Endothelial cell of umbilical vein (primary cell): ENCODE measurements at regions of chr17 and their contacts with region 1.

Region 1: GRCh38 chr17:28849281-28849680 is 5.5 kb upstream of the ERAL1 start:
- DNase-seq: peak; percentile 23
- H3K4me3 ChIP-seq: no peak overlapping the region
- H3K27ac ChIP-seq: no peak overlapping the region
- H3K4me1 ChIP-seq: peaks cover 2% of the 10 kb centered on the region
- H3K27me3 ChIP-seq: no peaks in the 10 kb centered on the region
- CTCF ChIP-seq: no peak
- POLR2A ChIP-seq: no peak

Region 2: GRCh38 chr17:28644985-28645939 is 204.0 kb before region 1 on chr17 and contains the start of gene BLTP2:
- CTCF ChIA-PET with region 1: no interaction called
- POLR2A ChIA-PET with region 1: no interaction called
- dilution Hi-C with region 1: no loop called
- intact Hi-C with region 1: no loop called
- DNase-seq: peak; percentile 95
- H3K4me3 ChIP-seq: peak within 1 kb of the TSS; percentile 54 to 77 (median 71)
- H3K27ac ChIP-seq: peak within 1 kb of the TSS; percentile 36
- H3K4me1 ChIP-seq: peaks cover 23% of the 10 kb centered on the region
- H3K27me3 ChIP-seq: no peaks in the 10 kb centered on the region
- CTCF ChIP-seq: no peak
- POLR2A ChIP-seq: peak; percentile 93
- total RNA-seq, gene BLTP2: 164 and 165 TPM in 2 replicates

Region 3: DNA sequence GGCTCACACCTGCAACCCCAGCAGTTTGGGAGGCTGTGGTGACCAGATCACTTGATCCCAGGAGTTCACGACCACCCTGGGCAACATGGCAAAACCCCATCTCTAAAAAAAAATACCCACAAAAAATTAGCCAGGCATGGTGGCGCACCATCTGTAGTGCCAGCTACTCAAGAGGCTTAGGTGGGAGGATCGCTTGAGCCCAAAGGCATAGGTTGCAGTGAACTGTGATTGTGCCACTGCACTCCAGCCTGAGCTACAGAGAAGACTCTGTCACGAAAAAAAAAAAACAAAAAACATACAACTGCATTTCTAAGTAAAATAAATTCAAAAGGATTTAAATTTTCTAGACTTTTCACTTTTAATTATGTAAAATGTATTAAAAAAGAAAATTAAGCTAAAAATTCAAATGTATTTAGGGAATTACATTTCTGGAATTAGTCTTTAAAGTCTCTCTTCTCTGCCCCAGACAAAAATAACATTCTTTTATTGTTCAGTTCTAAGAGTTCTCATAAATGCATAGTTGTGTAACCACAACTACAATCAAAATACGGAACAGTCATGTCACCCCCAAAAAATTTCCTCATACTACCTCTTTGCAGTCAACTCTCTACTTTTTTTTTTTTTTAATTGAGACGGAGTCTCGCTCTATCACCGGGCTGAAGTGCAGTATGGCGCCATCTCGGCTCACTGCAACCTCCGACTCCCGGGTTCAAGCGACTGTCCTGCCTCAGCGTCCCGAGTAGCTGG is 20.8 kb before region 1 on chr17:
- CTCF ChIA-PET with region 1: interaction called, 11 read pairs
- POLR2A ChIA-PET with region 1: no interaction called
- dilution Hi-C with region 1: no loop called
- intact Hi-C with region 1: no loop called
- DNase-seq: no peak
- H3K4me3 ChIP-seq: no peak overlapping the region
- H3K27ac ChIP-seq: no peak overlapping the region
- H3K4me1 ChIP-seq: no peaks in the 10 kb centered on the region
- H3K27me3 ChIP-seq: no peaks in the 10 kb centered on the region
- CTCF ChIP-seq: no peak
- POLR2A ChIP-seq: no peak

Region 4: GRCh38 chr17:28878981-28879380 is 29.7 kb after region 1 on chr17:
- CTCF ChIA-PET with region 1: interaction called, 17 read pairs
- POLR2A ChIA-PET with region 1: no interaction called
- dilution Hi-C with region 1: no loop called
- intact Hi-C with region 1: no loop called
- DNase-seq: peak; percentile 33
- H3K4me3 ChIP-seq: no peak overlapping the region
- H3K27ac ChIP-seq: no peak overlapping the region
- H3K4me1 ChIP-seq: no peaks in the 10 kb centered on the region
- H3K27me3 ChIP-seq: no peaks in the 10 kb centered on the region
- CTCF ChIP-seq: peak; percentile 10 to 47
- POLR2A ChIP-seq: no peak

Region 5: GRCh38 chr17:28902819-28903545 is 53.7 kb after region 1 on chr17 and contains the start of gene DHRS13:
- CTCF ChIA-PET with region 1: interaction called, 12 read pairs
- POLR2A ChIA-PET with region 1: no interaction called
- dilution Hi-C with region 1: no loop called
- intact Hi-C with region 1: loop called (anchors 2 kb)
- DNase-seq: peak; percentile 93
- H3K4me3 ChIP-seq: peak within 1 kb of the TSS; percentile 45 to 67 (median 59)
- H3K27ac ChIP-seq: peak within 1 kb of the TSS; percentile 15
- H3K4me1 ChIP-seq: peaks cover 13% of the 10 kb centered on the region
- H3K27me3 ChIP-seq: no peaks in the 10 kb centered on the region
- CTCF ChIP-seq: peak; percentile 87 to 99
- POLR2A ChIP-seq: no peak
- total RNA-seq, gene DHRS13: 5.6 and 7.2 TPM in 2 replicates

Region 6: GRCh38 chr17:28916302-28916934 is 67.1 kb after region 1 on chr17:
- CTCF ChIA-PET with region 1: interaction called, 15 read pairs
- POLR2A ChIA-PET with region 1: no interaction called
- dilution Hi-C with region 1: no loop called
- intact Hi-C with region 1: loop called (anchors 1 kb)
- DNase-seq: peak; percentile 50
- H3K4me3 ChIP-seq: no peak overlapping the region
- H3K27ac ChIP-seq: no peak overlapping the region
- H3K4me1 ChIP-seq: peaks cover 13% of the 10 kb centered on the region
- H3K27me3 ChIP-seq: no peaks in the 10 kb centered on the region
- CTCF ChIP-seq: peak; percentile 46
- POLR2A ChIP-seq: no peak